Lower leg skin (tissue), 4 donors: ENCODE measurements at regions of chr6 and their contacts with region 1.

Region 1: DNA sequence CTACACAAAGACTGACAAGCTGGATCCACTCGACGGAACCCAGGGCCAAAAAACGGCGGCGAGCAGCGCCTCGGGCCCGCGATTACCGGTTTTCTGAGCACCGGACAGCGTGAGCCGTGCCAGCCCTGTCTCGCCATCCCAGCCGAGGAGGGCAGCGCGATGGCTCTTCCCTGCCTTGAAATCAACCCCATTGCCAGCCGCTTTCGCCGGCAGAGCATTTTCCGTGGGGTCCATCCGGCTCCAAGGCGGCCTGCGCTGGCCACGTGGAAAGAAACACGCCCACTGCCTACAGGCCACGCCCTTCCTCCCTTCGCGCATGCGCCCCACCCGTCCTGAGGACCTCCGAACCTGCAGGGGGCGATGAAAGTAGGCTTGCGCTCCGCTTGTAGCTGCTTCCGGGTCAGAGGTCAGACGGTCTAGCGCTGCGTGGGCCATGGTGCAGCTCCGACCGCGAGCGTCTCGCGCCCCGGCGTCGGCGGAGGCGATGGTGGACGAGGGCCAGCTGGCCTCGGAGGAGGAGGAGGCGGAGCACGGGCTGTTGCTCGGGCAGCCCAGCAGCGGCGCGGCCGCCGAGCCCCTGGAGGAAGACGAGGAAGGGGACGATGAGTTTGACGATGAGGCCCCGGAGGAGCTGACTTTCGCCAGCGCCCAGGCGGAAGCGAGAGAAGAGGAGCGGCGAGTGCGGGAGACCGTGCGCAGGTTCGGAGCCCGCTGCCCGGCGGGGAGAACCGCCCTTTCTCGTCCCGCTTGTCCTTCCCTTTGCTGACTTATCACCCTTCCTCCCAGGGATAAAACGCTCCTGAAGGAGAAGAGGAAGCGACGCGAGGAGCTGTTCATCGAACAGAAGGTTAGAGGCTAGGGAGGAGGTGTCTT is at the start of gene NOL7:
- DNase-seq: peak; percentile 97 to 99
- H3K4me3 ChIP-seq: peak within 1 kb of the TSS; percentile 77
- CTCF ChIP-seq: peak in 1 of 3 donors; percentile 91
- POLR2A ChIP-seq: peak in 1 of 2 donors; percentile 34
- total RNA-seq, gene NOL7: 54.7 to 77.2 (median 66.7) TPM

Region 2: DNA sequence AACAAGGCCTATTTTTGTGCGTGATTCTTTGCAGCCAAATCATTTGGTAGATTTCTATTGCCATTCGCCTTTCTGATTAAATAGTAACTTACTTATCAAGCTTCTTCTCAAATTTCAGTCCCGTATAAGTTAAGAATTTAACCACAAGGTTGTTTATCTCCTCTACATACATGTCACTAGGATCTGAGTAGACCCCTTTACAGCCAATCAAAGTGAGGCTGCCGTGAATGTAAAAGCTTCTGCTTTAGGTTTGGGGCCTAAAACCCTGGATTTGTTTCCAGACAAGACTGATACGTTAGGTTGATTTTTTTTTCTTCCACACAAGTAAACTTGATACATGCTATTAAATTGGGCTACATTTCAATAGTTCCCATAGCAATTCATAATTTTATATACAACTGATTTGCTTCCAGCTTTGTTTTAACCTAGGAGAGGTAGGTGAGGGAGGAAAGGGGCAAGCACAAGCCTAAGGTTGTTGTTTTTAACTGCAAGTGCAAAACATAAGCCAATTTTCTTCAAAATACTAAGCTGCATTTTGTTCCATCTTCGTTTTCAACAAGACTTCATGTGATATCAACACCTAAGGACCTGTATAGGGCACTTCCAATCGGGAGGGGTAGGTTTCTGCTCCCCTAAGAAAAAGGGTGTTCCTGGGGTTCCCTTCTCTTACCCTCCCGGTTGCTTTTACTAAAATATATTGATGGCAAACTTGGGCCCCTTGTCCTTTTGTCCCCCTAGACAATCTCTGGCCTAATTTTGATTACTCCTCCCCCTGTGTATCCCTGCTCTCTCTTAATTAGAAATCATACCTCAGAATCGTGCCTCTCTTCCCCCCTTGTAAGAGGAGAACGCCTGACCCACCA is 94.8 kb after region 1 on chr6:
- intact Hi-C with region 1: loop called (anchors 10 kb)
- DNase-seq: no peak
- H3K4me3 ChIP-seq: peak overlapping the region; percentile 86
- CTCF ChIP-seq: no peak
- POLR2A ChIP-seq: no peak